Heart left ventricle (tissue), 16 donors: ENCODE measurements at regions of chr18 and their contacts with region 1.

Region 1: DNA sequence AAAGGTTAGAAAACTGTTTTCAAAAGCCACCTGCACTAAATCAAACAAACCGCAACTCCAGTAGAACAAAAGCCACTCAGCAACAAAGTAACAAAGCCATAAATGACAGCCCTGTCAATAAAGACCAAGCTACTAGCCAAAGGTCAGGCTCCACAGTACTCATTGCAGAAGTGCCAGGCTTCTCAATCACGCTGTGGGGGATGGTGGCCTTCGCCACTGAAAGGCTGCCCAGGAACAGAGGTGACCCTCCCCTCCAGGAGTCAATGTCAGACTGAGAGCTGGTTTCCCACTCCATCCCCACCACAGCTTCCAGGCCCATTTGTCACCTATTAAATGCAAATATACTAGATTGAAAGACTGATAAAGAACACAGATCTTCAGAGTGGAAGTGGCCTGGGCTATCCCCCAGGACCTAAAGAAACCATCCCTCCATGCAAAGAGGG is 5.9 kb downstream of the ATP8B1 start:
- DNase-seq: peak in 1 of 5 donors; percentile 50
- ATAC-seq: peak in 3 of 4 donors; percentile 48 to 85 (median 64)
- H3K4me3 ChIP-seq: no peak overlapping the region
- H3K27ac ChIP-seq: peak overlapping the region in 4 of 12 donors; percentile 12 to 47 (median 35)
- H3K4me1 ChIP-seq: peaks cover 0 to 73% (median 27%) of the 10 kb centered on the region in 12 donors
- H3K27me3 ChIP-seq: peaks cover 0 to 17% (median 0%) of the 10 kb centered on the region in 9 donors
- CTCF ChIP-seq: no peak
- POLR2A ChIP-seq: no peak

Region 2: DNA sequence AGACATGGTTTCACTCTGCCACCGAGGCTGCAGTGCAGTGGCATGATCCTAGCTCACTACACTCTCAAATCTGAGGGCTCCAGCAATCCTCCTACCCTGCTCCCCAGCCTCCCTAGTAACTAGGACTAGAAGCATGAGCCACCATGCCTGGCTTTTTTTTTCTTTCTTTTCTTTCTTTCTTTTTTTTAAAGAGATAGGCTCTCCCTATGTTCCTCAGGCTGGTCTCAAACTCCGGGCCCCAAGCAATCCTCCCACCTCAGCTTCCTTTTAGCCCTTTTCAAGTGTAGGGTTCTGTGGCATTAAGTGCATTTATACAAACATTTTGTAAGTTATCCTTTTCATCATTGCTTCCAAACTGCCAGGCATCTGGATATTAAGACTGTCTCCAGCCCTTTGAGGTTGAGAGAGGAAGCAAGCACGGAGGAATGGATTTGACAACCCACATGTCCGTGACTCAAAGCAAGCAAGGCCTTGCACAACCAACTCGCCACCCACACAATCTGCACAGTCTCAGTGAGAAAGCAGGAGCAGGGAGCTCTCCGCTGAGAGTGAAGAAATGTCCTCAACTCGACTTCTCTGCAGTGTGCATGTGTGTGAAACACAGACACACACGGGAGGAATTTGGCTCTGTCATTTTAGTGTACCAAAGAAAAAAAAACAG is 59.7 kb before region 1 on chr18:
- intact Hi-C with region 1: loop called in 2 of 10 experiments (anchors 10 kb)
- DNase-seq: peak; percentile 50 to 83 (median 68)
- ATAC-seq: peak; percentile 78 to 98 (median 93)
- H3K4me3 ChIP-seq: peak overlapping the region in 1 of 12 donors; percentile 0
- H3K27ac ChIP-seq: peak overlapping the region in 8 of 12 donors; percentile 5 to 67 (median 20)
- H3K4me1 ChIP-seq: peaks cover 0 to 22% (median 4%) of the 10 kb centered on the region in 12 donors
- H3K27me3 ChIP-seq: no peaks in the 10 kb centered on the region
- CTCF ChIP-seq: no peak
- POLR2A ChIP-seq: no peak